Panc1 (cell line): ENCODE measurements at regions of chr12 and their contacts with region 1.

Region 1: GRCh38 chr12:123580772-123581171 is 3.6 kb upstream of the TMED2 start:
- DNase-seq: no peak
- ATAC-seq: no peak
- H3K4me3 ChIP-seq: no peak overlapping the region
- H3K27ac ChIP-seq: no peak overlapping the region
- H3K4me1 ChIP-seq: peaks cover 6% of the 10 kb centered on the region
- H3K27me3 ChIP-seq: no peaks in the 10 kb centered on the region
- CTCF ChIP-seq: no peak

Region 2: GRCh38 chr12:123365025-123365917 is 215.5 kb before region 1 on chr12:
- CTCF ChIA-PET with region 1: no interaction called
- POLR2A ChIA-PET with region 1: interaction called, 15 read pairs
- in situ Hi-C with region 1: no loop called
- intact Hi-C with region 1: no loop called
- DNase-seq: peak; percentile 86
- ATAC-seq: peak; percentile 88
- H3K4me3 ChIP-seq: peak overlapping the region; percentile 71 to 93
- H3K27ac ChIP-seq: peak overlapping the region; percentile 98
- H3K4me1 ChIP-seq: peaks cover 11% of the 10 kb centered on the region
- H3K27me3 ChIP-seq: no peaks in the 10 kb centered on the region
- CTCF ChIP-seq: peak; percentile 88

Region 3: GRCh38 chr12:123533672-123534643 is 46.8 kb before region 1 on chr12 and contains the start of gene RILPL1:
- CTCF ChIA-PET with region 1: interaction called, 10 read pairs
- POLR2A ChIA-PET with region 1: interaction called, 4 read pairs
- in situ Hi-C with region 1: no loop called
- intact Hi-C with region 1: loop called (anchors 5 kb)
- DNase-seq: no peak
- ATAC-seq: peak; percentile 85
- H3K4me3 ChIP-seq: peak within 1 kb of the TSS; percentile 72
- H3K27ac ChIP-seq: peak within 1 kb of the TSS; percentile 84
- H3K4me1 ChIP-seq: peaks cover 18% of the 10 kb centered on the region
- H3K27me3 ChIP-seq: no peaks in the 10 kb centered on the region
- CTCF ChIP-seq: peak; percentile 80; the same call in 1 of the 2 replicates
- total RNA-seq, gene RILPL1: 16.2 TPM

Region 4: GRCh38 chr12:123614531-123614930 is 33.8 kb after region 1 on chr12:
- CTCF ChIA-PET with region 1: no interaction called
- POLR2A ChIA-PET with region 1: no interaction called
- in situ Hi-C with region 1: no loop called
- intact Hi-C with region 1: no loop called
- DNase-seq: no peak
- ATAC-seq: no peak
- H3K4me3 ChIP-seq: no peak overlapping the region
- H3K27ac ChIP-seq: no peak overlapping the region
- H3K4me1 ChIP-seq: no peaks in the 10 kb centered on the region
- H3K27me3 ChIP-seq: no peaks in the 10 kb centered on the region
- CTCF ChIP-seq: no peak

Region 5: DNA sequence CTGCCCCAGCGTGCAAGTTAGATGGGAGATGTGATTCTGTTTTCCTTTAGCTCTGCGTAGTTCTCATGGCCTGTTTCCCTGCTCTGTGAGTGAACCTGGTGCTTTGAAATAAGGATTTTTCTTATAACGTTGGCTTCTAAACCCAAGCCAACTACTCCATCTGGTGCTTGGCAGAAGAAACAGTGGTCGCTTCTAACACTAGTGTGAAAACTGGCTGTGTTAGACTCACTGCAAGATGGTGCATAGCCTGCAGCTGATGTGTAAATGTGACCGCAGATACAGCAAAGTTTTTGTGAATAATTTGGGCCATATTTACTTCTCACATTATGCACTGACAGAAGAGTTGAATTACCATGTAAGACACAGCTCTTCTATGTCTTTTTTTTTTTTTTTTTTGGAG is 65.1 kb after region 1 on chr12:
- CTCF ChIA-PET with region 1: no interaction called
- POLR2A ChIA-PET with region 1: interaction called, 12 read pairs
- in situ Hi-C with region 1: no loop called
- intact Hi-C with region 1: no loop called
- DNase-seq: no peak
- ATAC-seq: no peak
- H3K4me3 ChIP-seq: no peak overlapping the region
- H3K27ac ChIP-seq: no peak overlapping the region
- H3K4me1 ChIP-seq: no peaks in the 10 kb centered on the region
- H3K27me3 ChIP-seq: no peaks in the 10 kb centered on the region
- CTCF ChIP-seq: no peak

Region 6: DNA sequence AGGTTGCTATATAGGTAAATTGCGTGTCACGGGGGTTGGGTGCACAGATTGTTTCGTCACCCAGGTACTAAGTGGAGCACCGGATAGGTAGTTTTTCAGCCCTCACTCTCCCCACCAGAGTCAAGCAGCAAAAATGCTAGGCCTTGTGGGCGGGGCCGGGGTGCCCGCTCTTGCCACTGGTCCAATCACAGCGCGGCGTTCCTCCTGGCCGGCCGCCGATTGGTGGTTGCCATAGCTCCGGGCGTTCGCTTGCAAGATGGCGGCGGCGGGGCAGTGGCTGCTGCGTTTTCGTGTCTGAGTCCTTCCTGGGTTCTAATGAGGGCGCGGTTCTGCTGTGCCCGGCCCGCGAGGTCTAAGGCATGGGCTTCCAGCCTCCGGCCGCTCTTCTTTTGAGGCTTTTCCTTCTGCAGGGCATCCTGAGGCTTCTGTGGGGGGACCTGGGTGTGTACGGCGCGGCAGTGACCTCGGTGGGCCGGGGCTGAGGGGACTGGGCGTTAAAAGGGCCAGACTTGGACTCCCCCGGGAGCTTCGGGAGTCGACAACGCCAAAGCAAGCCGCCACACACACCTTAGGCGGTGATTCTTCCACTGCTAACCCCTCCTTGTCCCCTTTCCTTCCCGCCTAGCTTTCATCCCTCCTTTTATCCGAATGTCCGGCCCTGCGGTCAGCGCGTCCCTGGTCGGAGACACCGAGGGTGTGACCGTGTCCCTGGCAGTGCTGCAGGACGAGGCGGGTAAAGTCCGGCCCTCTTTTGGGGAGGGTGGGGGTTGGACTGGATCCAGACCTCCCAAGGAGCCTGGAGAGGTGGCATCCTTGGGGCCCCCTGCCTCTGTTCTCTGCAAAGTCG is 90.3 kb after region 1 on chr12 and contains the start of gene TCTN2:
- CTCF ChIA-PET with region 1: no interaction called
- POLR2A ChIA-PET with region 1: no interaction called
- in situ Hi-C with region 1: no loop called
- intact Hi-C with region 1: no loop called
- DNase-seq: peak; percentile 39
- ATAC-seq: peak; percentile 99
- H3K4me3 ChIP-seq: peak within 1 kb of the TSS; percentile 87 to 90
- H3K27ac ChIP-seq: peak within 1 kb of the TSS; percentile 75
- H3K4me1 ChIP-seq: peaks cover 10% of the 10 kb centered on the region; the same call in 1 of the 2 replicates
- H3K27me3 ChIP-seq: no peaks in the 10 kb centered on the region
- CTCF ChIP-seq: no peak
- total RNA-seq, gene TCTN2: 14.7 TPM